HepG2 (cell line): ENCODE measurements at regions of chr1 and their contacts with region 1.

Region 1: GRCh38 chr1:23979878-23980724 is at the start of gene SRSF10:
- DNase-seq: peak; percentile 95
- ATAC-seq: peak; percentile 96
- H3K4me3 ChIP-seq: peak within 1 kb of the TSS; percentile 91 to 96 (median 93)
- H3K27ac ChIP-seq: peak within 1 kb of the TSS; percentile 98
- H3K4me1 ChIP-seq: peaks cover 56% of the 10 kb centered on the region
- H3K27me3 ChIP-seq: no peaks in the 10 kb centered on the region; a peak in 1 of 5 replicates
- CTCF ChIP-seq: peak; percentile 76
- EP300 ChIP-seq: peak in 1 of 2 experiments; percentile 62; a peak in 2 of 4 replicates
- POLR2A ChIP-seq: peak; percentile 98
- RAD21 ChIP-seq: peak; percentile 73
- total RNA-seq, gene SRSF10: 156 and 186 TPM in 2 replicates

Region 2: DNA sequence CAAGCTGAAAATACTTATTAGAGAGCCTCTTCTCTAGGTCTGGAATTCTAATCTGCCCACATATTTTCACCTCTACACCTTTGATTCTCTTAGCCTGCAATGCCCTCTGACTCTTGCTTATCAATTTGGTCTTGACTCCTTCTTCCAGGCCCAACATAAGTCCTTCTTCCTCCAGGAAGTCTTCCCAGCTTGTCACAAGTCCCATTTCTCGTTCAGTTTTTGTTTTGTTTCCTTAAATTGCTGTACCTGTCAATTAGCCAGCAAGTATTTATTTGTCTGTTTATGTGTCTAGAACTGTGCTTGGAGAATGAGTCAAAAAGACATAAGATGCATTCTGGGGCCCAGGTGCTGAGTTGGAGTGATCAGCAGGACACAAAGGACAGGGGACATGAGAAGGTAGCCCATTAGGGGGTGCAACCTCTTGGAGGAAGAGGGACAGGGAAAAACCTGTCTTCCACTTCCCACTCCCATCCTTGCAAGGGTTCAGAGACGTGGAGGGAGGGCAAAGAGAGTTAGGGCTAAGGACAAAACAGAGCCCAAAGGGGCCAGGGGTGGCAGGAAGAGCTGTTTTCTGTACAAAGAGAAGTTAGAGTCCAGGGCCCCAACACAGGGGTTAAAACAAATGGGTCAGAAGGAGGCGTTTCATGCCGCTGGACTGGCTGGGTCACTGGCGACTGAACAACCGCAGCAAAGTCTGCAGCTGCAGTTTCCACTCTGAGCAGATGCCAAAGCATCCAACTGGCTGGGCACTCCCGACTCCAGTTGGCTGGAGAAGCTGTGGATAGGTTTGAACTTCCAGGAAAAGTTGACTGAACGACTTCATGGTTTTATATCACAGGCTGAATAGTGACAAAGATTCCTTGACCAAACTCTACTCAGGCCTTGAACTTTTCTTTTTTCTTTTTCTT is 56.3 kb before region 1 on chr1:
- CTCF ChIA-PET with region 1: no interaction called
- POLR2A ChIA-PET with region 1: no interaction called
- in situ Hi-C with region 1: no loop called
- intact Hi-C with region 1: no loop called
- DNase-seq: no peak
- ATAC-seq: no peak
- H3K4me3 ChIP-seq: no peak overlapping the region
- H3K27ac ChIP-seq: no peak overlapping the region
- H3K4me1 ChIP-seq: peaks cover 28% of the 10 kb centered on the region
- H3K27me3 ChIP-seq: peaks cover 0 to 14% of the 10 kb centered on the region in 2 experiments; a peak in 3 of 5 replicates
- CTCF ChIP-seq: no peak
- EP300 ChIP-seq: no peak
- POLR2A ChIP-seq: no peak
- RAD21 ChIP-seq: no peak

Region 3: DNA sequence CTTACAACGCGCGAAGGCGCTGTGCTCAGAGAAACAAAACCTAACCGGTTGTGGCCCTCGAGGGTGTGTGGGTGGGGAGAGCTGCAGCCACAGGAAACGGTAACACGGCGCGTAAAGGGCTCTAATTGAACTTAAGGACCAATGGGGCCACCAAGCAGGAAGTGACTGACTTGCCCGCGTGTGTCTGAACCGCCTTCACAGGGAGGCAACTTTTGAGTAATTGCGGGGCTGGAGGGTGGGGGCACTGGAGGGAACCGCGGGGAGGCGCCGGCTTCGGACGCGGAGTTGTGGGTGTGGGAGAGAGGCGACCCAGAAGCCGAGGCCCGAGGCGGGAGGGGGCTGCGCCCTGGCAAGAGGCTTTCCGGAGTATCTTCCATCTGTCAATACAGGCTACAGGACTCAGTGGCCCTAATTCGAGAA is 21.1 kb before region 1 on chr1:
- CTCF ChIA-PET with region 1: no interaction called
- POLR2A ChIA-PET with region 1: interaction called, 14 read pairs
- in situ Hi-C with region 1: no loop called
- intact Hi-C with region 1: no loop called
- DNase-seq: peak; percentile 92
- ATAC-seq: peak; percentile 85
- H3K4me3 ChIP-seq: peak overlapping the region; percentile 62 to 89 (median 87)
- H3K27ac ChIP-seq: peak overlapping the region; percentile 99
- H3K4me1 ChIP-seq: peaks cover 47% of the 10 kb centered on the region
- H3K27me3 ChIP-seq: peaks cover 0 to 4% of the 10 kb centered on the region in 2 experiments; a peak in 1 of 5 replicates
- CTCF ChIP-seq: peak; percentile 71
- EP300 ChIP-seq: no peak
- POLR2A ChIP-seq: peak in 1 of 2 experiments; percentile 50; a peak in 2 of 4 replicates
- RAD21 ChIP-seq: 0 out of 2 replicates have a peak, but pooled peaks have one; percentile 14

Region 4: GRCh38 chr1:24003331-24003972 is 23.4 kb after region 1 on chr1:
- CTCF ChIA-PET with region 1: no interaction called
- POLR2A ChIA-PET with region 1: interaction called, 17 read pairs
- in situ Hi-C with region 1: no loop called
- intact Hi-C with region 1: no loop called
- DNase-seq: peak; percentile 86
- ATAC-seq: peak; percentile 81
- H3K4me3 ChIP-seq: peak overlapping the region in 2 of 3 experiments; percentile 31 to 46; a peak in 3 of 6 replicates
- H3K27ac ChIP-seq: peak overlapping the region; percentile 71
- H3K4me1 ChIP-seq: peaks cover 81% of the 10 kb centered on the region
- H3K27me3 ChIP-seq: no peaks in the 10 kb centered on the region
- CTCF ChIP-seq: no peak
- EP300 ChIP-seq: peak in 1 of 2 experiments; percentile 51; a peak in 1 of 4 replicates
- POLR2A ChIP-seq: no peak
- RAD21 ChIP-seq: no peak

Region 5: DNA sequence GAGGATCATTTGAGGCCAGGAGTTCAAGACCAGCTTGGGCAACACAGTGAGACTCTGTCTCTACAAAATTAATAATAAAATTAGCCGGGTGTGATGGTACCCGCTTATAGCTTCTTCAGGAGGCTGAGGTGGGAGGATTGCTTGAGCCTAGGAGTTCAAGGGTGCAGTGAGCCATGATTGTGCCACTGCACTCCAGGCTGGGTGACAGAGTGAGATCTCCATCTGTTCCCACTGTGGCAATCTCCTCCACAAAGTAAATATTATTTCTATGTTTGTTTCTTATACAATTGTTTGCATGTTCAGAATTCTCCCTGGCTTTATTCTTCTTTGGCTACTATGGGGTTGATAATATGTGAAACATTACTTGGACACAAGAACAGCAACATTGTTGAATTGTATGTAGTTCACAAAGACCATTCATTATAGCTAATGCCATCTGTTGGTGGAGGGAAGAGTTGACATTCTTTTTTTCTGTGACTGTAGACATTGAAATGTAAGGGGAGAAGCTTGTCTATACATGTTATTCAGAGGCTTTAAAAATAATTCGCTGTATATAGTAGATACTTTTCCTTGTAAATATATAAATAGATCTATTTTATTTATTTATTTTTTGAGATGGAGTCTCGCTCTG is 47.9 kb after region 1 on chr1:
- CTCF ChIA-PET with region 1: no interaction called
- POLR2A ChIA-PET with region 1: interaction called, 35 read pairs
- in situ Hi-C with region 1: loop called (anchors 5 kb)
- intact Hi-C with region 1: loop called (anchors 2 kb)
- DNase-seq: peak; percentile 60
- ATAC-seq: peak; percentile 67
- H3K4me3 ChIP-seq: no peak overlapping the region
- H3K27ac ChIP-seq: peak overlapping the region; percentile 19
- H3K4me1 ChIP-seq: peaks cover 59% of the 10 kb centered on the region
- H3K27me3 ChIP-seq: no peaks in the 10 kb centered on the region
- CTCF ChIP-seq: peak; percentile 73
- EP300 ChIP-seq: no peak
- POLR2A ChIP-seq: no peak
- RAD21 ChIP-seq: peak; percentile 64

Region 6: GRCh38 chr1:24085546-24085945 is 105.4 kb after region 1 on chr1:
- CTCF ChIA-PET with region 1: no interaction called
- POLR2A ChIA-PET with region 1: no interaction called
- in situ Hi-C with region 1: no loop called
- intact Hi-C with region 1: no loop called
- DNase-seq: no peak
- ATAC-seq: no peak
- H3K4me3 ChIP-seq: no peak overlapping the region
- H3K27ac ChIP-seq: no peak overlapping the region
- H3K4me1 ChIP-seq: no peaks in the 10 kb centered on the region
- H3K27me3 ChIP-seq: no peaks in the 10 kb centered on the region
- CTCF ChIP-seq: no peak
- EP300 ChIP-seq: no peak
- POLR2A ChIP-seq: no peak
- RAD21 ChIP-seq: no peak

Region 7: GRCh38 chr1:24266398-24266941 is 286.4 kb after region 1 on chr1:
- CTCF ChIA-PET with region 1: no interaction called
- POLR2A ChIA-PET with region 1: no interaction called
- in situ Hi-C with region 1: no loop called
- intact Hi-C with region 1: no loop called
- DNase-seq: peak; percentile 14
- ATAC-seq: peak; percentile 35; the same call in 1 of the 3 replicates
- H3K4me3 ChIP-seq: no peak overlapping the region
- H3K27ac ChIP-seq: no peak overlapping the region
- H3K4me1 ChIP-seq: peaks cover 11% of the 10 kb centered on the region
- H3K27me3 ChIP-seq: no peaks in the 10 kb centered on the region
- CTCF ChIP-seq: no peak
- EP300 ChIP-seq: no peak
- POLR2A ChIP-seq: no peak
- RAD21 ChIP-seq: no peak